CD8-positive, alpha-beta memory T cell (primary cell): ENCODE measurements at regions of chr10 and their contacts with region 1.

Region 1: DNA sequence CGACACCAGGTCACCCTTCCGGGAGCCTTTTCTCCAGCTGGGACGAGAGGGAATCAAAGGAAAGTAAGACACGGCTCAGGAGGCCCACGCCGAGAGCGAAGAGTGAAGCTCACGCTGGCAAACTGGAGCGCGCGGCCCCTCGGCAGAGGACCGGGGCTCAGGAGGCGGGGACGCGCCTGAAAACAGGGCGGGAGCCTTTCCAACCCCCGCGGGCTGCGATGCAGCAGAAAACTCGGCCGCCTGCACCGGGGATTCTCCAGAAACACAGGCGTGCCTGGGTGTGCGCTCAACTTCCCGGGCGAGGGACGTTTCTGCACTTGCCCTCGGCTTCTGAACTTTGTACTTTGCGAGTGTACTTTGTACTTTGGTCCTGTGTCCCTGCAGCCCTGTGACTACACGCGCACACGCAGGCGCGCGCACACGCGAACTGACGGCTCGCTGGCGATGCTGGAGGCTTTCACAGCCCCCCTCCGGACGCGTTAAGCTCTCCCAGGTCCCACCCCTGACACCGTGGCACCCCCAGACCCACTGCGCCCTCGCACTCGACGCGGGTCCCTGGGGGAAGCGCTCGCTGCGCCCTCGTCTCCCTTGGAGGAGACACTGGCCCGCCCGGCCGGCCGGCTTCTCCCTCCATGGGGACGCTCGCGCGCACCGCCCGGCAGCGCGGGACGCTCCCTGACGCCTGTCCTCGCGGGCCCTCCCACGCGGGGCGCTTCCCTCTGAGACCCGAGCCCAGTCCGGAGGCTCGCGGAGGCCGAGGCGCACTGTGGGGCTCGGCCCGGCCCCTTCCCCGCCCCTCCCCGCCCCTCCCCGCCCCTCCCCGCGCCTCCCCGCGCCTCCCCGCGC is 588 bp upstream of the PAOX start:
- DNase-seq: peak; percentile 44 to 75 (median 55)
- H3K4me3 ChIP-seq: peak overlapping the region; percentile 78
- H3K4me3 Mint-ChIP-seq: peak overlapping the region; percentile 86 to 92 (median 87)
- H3K27ac ChIP-seq: peak overlapping the region; percentile 59
- H3K27ac Mint-ChIP-seq: peak overlapping the region in 5 of 8 donors; percentile 22 to 83 (median 64)
- H3K4me1 ChIP-seq: peaks cover 6% of the 10 kb centered on the region
- H3K4me1 Mint-ChIP-seq: peaks cover 7 to 37% (median 13%) of the 10 kb centered on the region in 3 donors
- H3K27me3 ChIP-seq: no peaks in the 10 kb centered on the region
- H3K27me3 Mint-ChIP-seq: peaks cover 0 to 1% of the 10 kb centered on the region in 2 donors

Region 2: GRCh38 chr10:133278577-133279265 is 99.8 kb before region 1 on chr10:
- CTCF ChIA-PET with region 1: no interaction called
- POLR2A ChIA-PET with region 1: no interaction called
- DNase-seq: peak in 4 of 5 donors; percentile 58 to 87 (median 76)
- H3K4me3 ChIP-seq: peak overlapping the region; percentile 11
- H3K4me3 Mint-ChIP-seq: peak overlapping the region; percentile 84 to 98 (median 89)
- H3K27ac ChIP-seq: peak overlapping the region; percentile 96
- H3K27ac Mint-ChIP-seq: peak overlapping the region; percentile 94 to 100 (median 98)
- H3K4me1 ChIP-seq: peaks cover 45% of the 10 kb centered on the region
- H3K4me1 Mint-ChIP-seq: peaks cover 23 to 54% (median 35%) of the 10 kb centered on the region in 3 donors
- H3K27me3 ChIP-seq: no peaks in the 10 kb centered on the region
- H3K27me3 Mint-ChIP-seq: no peaks in the 10 kb centered on the region

Region 3: DNA sequence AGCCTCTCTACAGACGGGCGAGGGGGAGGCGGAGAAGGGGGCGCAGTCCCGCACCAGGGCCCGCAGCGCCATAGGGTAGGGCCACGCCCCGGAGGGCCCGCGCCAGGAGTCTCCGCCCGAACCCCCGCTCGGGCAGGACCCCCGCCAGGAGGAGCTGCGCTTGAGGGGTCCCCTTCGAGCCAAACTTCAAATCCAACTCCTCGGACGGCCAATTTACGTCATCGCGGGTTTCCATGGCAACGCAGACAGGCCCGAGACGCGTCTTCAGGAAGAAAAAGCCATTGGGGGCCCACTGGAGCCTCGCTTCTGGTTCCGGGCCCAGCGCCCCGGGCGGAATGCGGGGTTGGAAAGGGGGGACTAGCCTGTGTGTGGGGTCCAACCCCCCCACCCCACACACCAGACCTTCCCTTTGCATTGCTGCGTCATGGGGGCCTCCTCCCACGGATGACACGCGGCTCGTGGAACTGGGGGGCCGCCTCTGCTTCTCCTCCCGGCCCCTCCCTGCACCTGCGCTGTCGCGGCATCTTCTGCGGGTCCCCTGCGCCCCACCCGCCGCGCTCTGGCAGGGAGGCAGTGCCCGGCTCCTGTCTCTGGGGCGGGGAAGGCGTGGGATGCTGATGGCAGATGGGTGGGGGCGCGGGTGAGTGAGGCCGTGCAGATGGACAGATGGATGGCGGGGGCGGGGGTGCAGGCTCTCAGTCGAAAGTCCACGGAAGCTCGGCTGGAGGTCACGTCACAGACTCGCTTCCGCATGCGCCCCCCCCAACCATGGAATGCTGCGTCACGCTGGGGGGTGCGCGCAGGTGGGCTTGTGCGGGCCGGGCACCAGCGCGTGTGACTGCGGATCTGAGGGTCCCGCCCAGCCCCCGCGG is 43.0 kb before region 1 on chr10:
- CTCF ChIA-PET with region 1: no interaction called
- POLR2A ChIA-PET with region 1: interaction called, 10 read pairs
- DNase-seq: peak; percentile 81 to 96 (median 87)
- H3K4me3 ChIP-seq: peak overlapping the region; percentile 56
- H3K4me3 Mint-ChIP-seq: peak overlapping the region; percentile 71 to 91 (median 82)
- H3K27ac ChIP-seq: peak overlapping the region; percentile 80
- H3K27ac Mint-ChIP-seq: peak overlapping the region; percentile 71 to 95 (median 94)
- H3K4me1 ChIP-seq: peaks cover 19% of the 10 kb centered on the region
- H3K4me1 Mint-ChIP-seq: peaks cover 3 to 7% (median 4%) of the 10 kb centered on the region in 3 donors
- H3K27me3 ChIP-seq: no peaks in the 10 kb centered on the region
- H3K27me3 Mint-ChIP-seq: peaks cover 0 to 6% of the 10 kb centered on the region in 2 donors